Right ventricle myocardium superior (tissue), 1 donor: ENCODE measurements at regions of chr11 and their contacts with region 1.

Region 1: DNA sequence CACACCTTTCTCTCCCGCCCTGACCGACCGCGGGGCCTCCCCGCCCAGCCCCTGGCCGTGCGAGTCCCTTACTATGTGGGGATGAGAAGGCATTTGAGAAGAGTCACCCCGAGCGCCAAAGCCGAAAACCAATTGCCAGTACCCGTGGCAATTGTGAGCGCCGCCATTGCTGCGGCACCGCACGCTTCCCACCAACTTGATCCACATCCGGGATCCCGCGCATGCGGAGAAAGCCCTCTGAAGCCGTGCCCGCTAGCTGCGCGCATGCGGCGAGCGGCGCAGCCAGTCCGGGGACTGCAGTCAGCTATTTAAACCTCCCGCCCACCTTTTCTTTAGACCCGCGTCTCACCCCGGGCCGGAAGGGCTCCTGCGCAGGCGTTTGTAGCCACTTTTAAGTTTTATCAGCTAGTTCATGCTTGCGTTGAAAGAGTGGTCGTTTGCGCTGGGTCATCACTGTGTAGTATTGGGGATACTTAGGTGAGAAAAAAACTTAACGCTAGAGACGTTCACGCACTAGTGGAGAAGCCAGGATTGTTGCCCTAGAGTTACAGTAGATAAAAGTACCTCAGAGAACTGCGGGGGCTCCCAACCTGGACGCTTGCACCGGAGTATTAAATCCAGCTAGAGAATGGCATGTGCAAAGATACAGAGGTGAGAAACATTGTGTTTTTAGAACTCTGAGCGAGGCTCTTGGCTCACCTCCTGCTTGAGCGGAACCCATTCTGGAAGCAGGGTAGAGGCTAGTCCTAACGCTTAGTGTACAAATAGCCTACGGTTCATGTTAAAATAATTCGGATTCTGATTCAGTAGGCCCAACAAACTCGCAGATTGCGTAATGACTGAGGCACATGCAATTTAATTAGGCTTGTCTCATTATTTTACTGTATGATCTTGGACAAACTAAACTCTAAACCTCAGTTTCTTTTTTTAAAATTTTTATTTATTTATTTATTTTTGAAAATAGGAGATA is at the start of gene ALG8:
- DNase-seq: peak; percentile 98
- ATAC-seq: peak; percentile 99
- total RNA-seq, gene ALG8: 15.8 TPM

Region 2: GRCh38 chr11:77820563-77821348 is 319.0 kb before region 1 on chr11 and contains the starts of genes AAMDC and RSF1:
- intact Hi-C with region 1: no loop called
- DNase-seq: peak; percentile 99
- ATAC-seq: peak; percentile 92
- total RNA-seq, gene AAMDC: 127 TPM
- total RNA-seq, gene RSF1: 37.7 TPM

Region 3: GRCh38 chr11:78177216-78177615 is 37.5 kb after region 1 on chr11:
- intact Hi-C with region 1: no loop called
- DNase-seq: no peak
- ATAC-seq: no peak

Region 4: GRCh38 chr11:78188286-78189173 is 48.8 kb after region 1 on chr11 and contains the starts of genes KCTD21 and USP35:
- intact Hi-C with region 1: loop called (anchors 5 kb)
- DNase-seq: peak; percentile 99
- ATAC-seq: peak; percentile 97
- total RNA-seq, gene KCTD21: 10.4 TPM
- total RNA-seq, gene USP35: 4.6 TPM

Region 5: DNA sequence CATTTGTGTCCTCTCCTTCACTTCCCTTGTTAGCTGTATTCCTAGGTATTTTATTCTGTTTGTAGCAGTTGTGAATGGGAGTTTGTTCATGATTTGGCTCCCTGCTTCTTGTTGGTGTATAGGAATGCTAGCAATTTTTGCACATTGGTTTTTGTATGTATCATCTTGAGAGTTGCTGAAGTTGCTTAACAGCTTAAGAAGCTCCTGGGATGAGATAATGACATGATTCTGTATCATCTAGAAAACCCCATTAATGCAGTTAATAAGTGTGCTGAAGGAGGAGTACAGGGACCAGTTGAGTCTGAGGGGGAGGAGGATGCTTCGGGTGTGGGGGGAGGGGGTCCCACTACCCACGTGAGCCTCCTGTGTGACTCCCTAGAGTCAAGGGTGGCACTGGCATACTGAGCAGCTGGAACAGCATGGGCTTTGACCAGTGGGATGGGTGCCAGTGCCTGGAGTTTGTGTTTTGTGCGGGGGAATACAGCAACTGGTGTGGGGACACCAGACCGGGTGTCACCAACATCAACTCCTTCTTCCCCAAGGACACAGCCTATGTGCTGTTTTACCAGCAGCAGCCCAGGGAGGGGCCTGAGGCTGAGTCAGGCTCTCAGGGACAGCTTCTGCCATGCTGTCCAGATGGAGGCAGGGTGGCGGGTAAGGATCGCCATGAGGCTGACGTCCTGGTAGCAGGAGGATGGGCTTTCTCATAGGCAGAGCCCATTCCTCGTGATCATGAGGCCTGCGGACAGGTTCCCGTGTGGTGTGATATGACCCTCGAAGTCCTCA is 73.1 kb after region 1 on chr11:
- intact Hi-C with region 1: no loop called
- DNase-seq: no peak
- ATAC-seq: peak; percentile 19